ENCODE measurements at regions of chr2 and their contacts with region 1.

Region 1: DNA sequence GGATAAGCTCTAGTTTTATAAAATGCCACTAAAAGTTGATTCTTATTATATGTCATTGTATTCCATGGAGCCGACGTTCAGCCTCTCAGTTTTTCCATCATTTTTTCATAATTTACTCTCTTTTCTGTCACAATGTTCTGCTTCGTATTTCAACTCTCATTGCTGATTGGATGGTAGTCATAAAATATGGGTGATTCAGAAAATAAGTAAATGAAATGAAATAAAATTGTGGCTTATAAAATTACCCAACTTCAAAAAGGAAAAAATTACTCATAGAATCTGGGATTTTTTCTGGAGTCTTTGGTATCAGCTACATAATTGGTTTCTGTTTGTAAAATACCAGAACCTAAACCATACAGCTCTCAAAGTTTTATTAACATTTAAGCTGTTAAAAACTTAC is 139.7 kb upstream of the ITGA4 start:
- DNase-seq: no peak
- H3K27ac ChIP-seq: no peak overlapping the region
- CTCF ChIP-seq: no peak

Region 2: DNA sequence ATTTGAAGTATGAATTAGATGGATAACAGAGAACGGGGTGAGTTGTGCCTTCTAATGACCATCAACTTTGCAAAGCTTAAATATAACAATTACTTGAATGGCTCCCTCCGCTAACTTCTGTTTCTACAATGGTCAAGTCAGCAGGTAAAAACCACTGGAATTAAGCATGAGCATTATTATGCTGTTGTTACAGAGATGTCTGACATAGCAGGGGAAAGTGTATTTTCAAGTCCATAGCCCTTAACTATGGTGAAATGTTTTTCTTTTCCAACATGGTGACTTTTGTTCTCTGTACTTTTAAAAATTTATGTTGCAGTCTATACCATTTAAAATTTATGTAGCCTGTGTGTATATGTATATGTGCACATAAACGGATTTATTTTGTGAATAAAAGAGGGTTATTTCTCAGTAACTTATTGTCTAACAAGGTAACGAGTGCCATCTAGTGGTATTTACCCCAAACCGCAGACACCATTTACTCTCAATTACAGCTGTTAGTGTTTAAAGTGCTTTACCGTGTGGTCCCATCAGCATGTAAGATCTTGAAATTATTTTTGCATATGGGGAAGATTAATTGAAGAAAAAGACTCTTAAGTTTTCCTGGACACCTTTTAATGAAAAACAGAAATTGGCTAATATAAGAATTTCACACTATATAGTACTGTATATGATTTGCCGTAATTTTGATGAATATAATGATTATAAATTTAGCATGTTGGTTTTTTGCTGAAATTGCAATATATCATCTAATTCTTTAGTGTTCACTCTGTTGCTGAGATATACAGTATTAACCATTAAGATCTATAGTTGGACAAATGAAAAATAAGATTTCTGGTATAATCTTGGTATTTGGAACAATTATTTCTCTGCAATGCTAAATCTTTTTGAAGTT is 258.9 kb before region 1 on chr2:
- CTCF ChIA-PET with region 1: interaction called, 10 read pairs
- POLR2A ChIA-PET with region 1: no interaction called
- DNase-seq: peak; percentile 24
- H3K27ac ChIP-seq: no peak overlapping the region
- CTCF ChIP-seq: peak; percentile 75

Measured in RWPE1 (cell line).